Left cardiac atrium (tissue), 4 donors: ENCODE measurements at regions of chr4 and their contacts with region 1.

Region 1: GRCh38 chr4:102610007-102610406 is 108.8 kb downstream of the NFKB1 start:
- DNase-seq: no peak
- ATAC-seq: no peak

Region 2: DNA sequence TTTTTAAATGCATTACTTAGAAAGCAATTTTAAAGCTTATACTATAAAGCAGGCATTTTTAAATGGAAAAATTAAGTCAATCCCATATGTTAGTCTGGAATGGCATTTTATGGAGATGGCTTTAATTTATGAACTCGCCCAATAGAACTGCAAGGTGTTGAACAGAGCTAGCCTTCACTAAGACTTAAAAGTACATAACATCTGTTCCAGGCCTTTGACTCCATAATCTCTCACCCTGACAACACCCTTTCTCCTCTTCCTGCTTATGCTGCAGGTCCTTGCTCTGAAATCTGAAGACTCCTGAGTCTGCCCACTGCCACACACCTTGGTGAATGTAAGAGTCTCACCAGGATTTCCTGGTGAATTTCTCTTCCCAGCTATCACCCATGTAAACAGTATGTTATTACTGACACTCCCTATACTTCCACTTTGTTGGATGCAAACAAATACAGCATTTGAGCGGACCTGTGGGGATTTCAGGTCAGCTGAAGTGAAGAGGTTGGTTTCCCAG is 247.0 kb before region 1 on chr4:
- intact Hi-C with region 1: no loop called
- DNase-seq: no peak
- ATAC-seq: no peak

Region 3: GRCh38 chr4:102493794-102494193 is 116.2 kb before region 1 on chr4:
- intact Hi-C with region 1: loop called in 1 of 2 experiments (anchors 10 kb)
- DNase-seq: no peak
- ATAC-seq: no peak

Region 4: DNA sequence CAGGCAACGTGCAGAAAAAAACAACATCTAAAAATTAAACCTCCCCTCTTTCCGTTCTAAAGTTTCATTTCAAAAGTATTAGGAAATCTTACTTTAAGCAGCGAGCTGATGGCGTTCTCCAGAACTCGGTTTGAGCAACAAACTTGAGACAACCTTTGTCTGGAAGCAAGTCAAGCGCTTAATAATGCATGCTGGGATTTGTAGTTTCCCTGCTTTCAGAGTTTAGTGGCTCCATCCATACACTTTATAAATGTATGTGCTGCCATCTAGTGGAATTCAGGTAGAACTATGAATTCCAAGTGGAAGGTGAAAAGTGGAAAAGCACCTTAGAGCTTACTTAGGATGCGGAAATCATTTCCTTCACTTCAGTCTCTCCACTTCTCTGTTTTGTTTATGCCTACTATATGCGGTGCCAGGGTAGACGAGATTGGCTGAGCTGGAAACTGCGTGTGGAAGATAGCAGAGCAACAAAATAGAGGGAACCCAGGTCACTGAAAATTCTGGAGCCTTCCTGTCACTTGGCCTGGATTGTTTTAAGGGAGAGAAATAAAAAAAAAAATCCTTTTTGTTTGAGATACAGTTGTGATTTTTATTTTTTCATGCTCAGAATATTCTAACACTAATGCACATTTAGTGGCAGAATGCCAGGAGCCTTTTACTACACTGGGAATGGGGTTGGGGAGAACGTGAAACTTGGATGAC is 489.8 kb after region 1 on chr4 and contains the start of gene BDH2:
- intact Hi-C with region 1: loop called in 1 of 2 experiments (anchors 10 kb)
- DNase-seq: peak; percentile 27
- ATAC-seq: peak; percentile 97 to 98
- total RNA-seq, gene BDH2: 28.0 to 36.7 TPM